ENCODE measurements at regions of chr12 and their contacts with region 1.

Region 1: DNA sequence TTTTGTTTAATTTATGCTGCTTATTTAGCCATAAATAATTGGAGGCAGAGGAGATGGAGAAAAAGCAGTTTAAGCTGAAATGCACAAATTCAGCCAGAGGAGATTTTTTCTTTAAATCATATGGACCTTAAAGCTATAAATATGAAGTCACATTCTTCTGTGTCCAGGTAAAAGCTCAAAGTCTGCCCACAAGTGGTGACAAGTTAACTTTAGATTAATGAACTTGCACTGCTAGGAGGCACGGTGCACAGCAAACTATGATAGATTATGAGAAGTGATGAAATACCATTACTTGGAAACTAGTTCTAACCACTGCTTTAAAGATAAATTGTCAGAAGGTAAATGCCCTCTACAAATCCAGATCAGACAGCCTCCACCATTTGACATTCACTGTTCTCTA is 69.0 kb downstream of the IFT81 start:
- DNase-seq: no peak
- H3K4me3 Mint-ChIP-seq: no peak overlapping the region
- H3K27ac Mint-ChIP-seq: no peak overlapping the region
- H3K4me1 Mint-ChIP-seq: no peaks in the 10 kb centered on the region
- H3K27me3 Mint-ChIP-seq: no peaks in the 10 kb centered on the region
- CTCF ChIP-seq: no peak

Region 2: DNA sequence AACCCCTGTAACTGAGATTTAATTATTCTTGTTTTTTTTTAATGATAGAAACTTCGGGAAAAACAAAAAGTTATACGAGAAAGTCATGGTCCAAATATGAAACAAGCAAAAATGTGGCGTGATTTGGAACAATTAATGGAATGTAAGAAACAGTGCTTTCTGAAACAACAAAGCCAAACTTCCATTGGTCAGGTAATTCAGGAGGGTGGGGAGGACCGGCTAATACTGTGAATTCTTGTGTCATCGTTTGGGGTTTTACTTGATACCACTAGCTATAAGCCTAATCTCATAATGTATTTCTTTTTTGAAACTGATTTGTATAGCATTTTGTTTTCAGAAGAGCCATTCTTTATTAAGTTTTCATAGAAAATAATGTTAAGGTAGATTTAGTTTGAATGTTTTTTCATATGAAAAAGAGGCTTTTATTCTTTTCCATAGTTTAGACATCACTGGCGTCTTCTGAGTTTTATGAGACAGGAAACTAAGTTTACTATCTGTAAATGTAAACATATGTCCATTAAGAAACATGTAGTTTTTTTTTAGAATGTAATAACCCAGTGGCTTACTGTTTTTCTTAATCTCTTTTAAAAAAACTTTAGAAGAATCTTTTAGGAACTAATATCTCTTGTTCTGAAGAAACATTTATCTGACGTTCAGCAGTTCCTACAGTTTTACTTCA is 24.9 kb after region 1 on chr12:
- CTCF ChIA-PET with region 1: no interaction called
- POLR2A ChIA-PET with region 1: no interaction called
- intact Hi-C with region 1: loop called (anchors 1 kb)
- DNase-seq: no peak
- H3K4me3 Mint-ChIP-seq: no peak overlapping the region
- H3K27ac Mint-ChIP-seq: no peak overlapping the region
- H3K4me1 Mint-ChIP-seq: no peaks in the 10 kb centered on the region
- H3K27me3 Mint-ChIP-seq: no peaks in the 10 kb centered on the region
- CTCF ChIP-seq: no peak

Region 3: DNA sequence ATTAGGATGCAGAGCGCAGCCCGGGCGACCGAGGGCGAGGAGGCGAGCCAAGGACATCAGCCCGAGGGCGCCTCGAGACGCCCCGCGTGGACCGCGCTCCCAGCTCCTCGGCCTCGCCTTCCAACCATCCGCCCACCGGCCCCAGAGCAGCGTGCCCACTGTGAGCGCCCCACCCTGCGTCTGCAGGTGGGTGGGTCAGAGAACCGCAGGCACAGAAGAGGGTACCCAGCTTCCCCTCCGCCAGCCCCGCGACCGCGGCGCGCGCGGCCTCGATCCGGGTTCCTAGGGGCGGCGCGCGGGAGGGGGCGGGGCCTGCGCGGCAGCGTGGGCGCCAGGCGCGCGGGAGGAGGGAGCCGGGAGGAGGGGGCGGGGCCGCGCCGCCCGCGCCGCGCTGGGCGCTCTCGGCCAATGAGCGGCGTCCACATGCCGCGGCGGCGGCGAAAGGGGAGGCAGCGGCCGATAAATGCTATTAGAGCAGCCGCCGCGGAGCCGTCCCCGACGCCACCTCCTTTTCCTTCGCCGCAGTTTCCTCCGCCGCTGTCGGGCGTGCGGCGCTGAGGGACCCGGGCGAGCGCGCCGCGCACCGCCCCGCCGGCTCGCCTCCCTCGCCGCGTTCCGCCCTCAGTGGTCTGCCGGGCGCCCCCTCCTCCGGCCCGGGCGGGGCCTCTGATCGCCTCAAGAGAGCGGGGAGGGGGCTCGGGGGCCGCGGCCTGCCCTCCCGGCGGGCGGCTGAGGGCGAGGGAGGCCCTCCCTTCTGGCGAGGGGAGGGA is 87.8 kb after region 1 on chr12 and contains the start of gene ATP2A2:
- CTCF ChIA-PET with region 1: no interaction called
- POLR2A ChIA-PET with region 1: no interaction called
- intact Hi-C with region 1: no loop called
- DNase-seq: peak; percentile 92
- H3K4me3 Mint-ChIP-seq: peak within 1 kb of the TSS; percentile 87
- H3K27ac Mint-ChIP-seq: peak within 1 kb of the TSS; percentile 85
- H3K4me1 Mint-ChIP-seq: peaks cover 22% of the 10 kb centered on the region
- H3K27me3 Mint-ChIP-seq: no peaks in the 10 kb centered on the region
- CTCF ChIP-seq: no peak
- total RNA-seq, gene ATP2A2: 272 and 308 TPM in 2 replicates

Measured in MCF 10A (cell line).